ENCODE measurements at regions of chr2 and their contacts with region 1.

Region 1: DNA sequence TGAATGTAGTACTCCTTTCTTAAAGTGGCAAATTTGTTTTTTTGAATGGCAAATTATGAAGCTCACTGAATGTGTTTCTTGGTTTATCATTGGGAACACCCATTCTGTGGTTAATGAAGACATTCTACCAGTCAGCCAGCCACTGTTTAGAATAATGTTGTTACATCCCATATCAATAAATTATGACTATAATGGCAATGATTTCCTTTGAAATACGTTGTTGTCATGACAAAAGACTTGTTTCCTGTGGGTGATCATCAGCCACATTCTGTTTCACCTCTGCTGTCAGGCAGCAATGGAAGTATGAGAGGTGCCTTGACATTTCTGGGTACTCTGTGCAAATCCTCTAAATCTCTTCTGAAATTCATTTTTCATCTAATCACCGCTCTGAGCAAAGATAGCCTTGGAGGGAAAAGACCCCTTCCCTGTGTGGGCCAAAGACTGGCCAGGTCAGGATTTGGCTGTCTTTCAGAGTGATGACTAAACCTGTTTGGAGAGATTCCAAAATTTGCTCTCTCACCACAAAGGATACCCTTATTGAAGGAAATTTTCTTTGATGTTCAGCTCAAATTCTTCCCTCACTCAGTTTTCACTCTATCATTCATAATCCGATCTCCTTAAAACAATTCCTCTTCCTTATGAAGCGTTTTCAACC is 869.2 kb downstream of the BCL11A start:
- DNase-seq: no peak
- ATAC-seq: no peak
- H3K4me3 ChIP-seq: no peak overlapping the region
- H3K4me3 Mint-ChIP-seq: no peak overlapping the region
- H3K27ac ChIP-seq: no peak overlapping the region
- H3K27ac Mint-ChIP-seq: no peak overlapping the region
- H3K4me1 ChIP-seq: no peaks in the 10 kb centered on the region
- H3K4me1 Mint-ChIP-seq: no peaks in the 10 kb centered on the region
- H3K27me3 ChIP-seq: no peaks in the 10 kb centered on the region
- H3K27me3 Mint-ChIP-seq: no peaks in the 10 kb centered on the region
- CTCF ChIP-seq: no peak

Region 2: GRCh38 chr2:59529726-59530125 is 154.5 kb before region 1 on chr2:
- CTCF ChIA-PET with region 1: no interaction called
- POLR2A ChIA-PET with region 1: no interaction called
- intact Hi-C with region 1: no loop called
- DNase-seq: no peak
- ATAC-seq: no peak
- H3K4me3 ChIP-seq: no peak overlapping the region
- H3K4me3 Mint-ChIP-seq: no peak overlapping the region
- H3K27ac ChIP-seq: no peak overlapping the region
- H3K27ac Mint-ChIP-seq: no peak overlapping the region
- H3K4me1 ChIP-seq: no peaks in the 10 kb centered on the region
- H3K4me1 Mint-ChIP-seq: no peaks in the 10 kb centered on the region
- H3K27me3 ChIP-seq: no peaks in the 10 kb centered on the region
- H3K27me3 Mint-ChIP-seq: no peaks in the 10 kb centered on the region
- CTCF ChIP-seq: no peak

Region 3: GRCh38 chr2:59674100-59674499 is 10.1 kb before region 1 on chr2:
- CTCF ChIA-PET with region 1: no interaction called
- POLR2A ChIA-PET with region 1: no interaction called
- intact Hi-C with region 1: loop called in 1 of 2 experiments (anchors 1 kb)
- DNase-seq: no peak
- ATAC-seq: no peak
- H3K4me3 ChIP-seq: no peak overlapping the region
- H3K4me3 Mint-ChIP-seq: no peak overlapping the region
- H3K27ac ChIP-seq: no peak overlapping the region
- H3K27ac Mint-ChIP-seq: no peak overlapping the region
- H3K4me1 ChIP-seq: no peaks in the 10 kb centered on the region
- H3K4me1 Mint-ChIP-seq: no peaks in the 10 kb centered on the region
- H3K27me3 ChIP-seq: no peaks in the 10 kb centered on the region
- H3K27me3 Mint-ChIP-seq: no peaks in the 10 kb centered on the region
- CTCF ChIP-seq: no peak

Region 4: GRCh38 chr2:59706729-59707128 is 22.5 kb after region 1 on chr2:
- CTCF ChIA-PET with region 1: no interaction called
- POLR2A ChIA-PET with region 1: no interaction called
- intact Hi-C with region 1: no loop called
- DNase-seq: no peak
- ATAC-seq: no peak
- H3K4me3 ChIP-seq: no peak overlapping the region
- H3K4me3 Mint-ChIP-seq: no peak overlapping the region
- H3K27ac ChIP-seq: no peak overlapping the region
- H3K27ac Mint-ChIP-seq: no peak overlapping the region
- H3K4me1 ChIP-seq: no peaks in the 10 kb centered on the region
- H3K4me1 Mint-ChIP-seq: no peaks in the 10 kb centered on the region
- H3K27me3 ChIP-seq: no peaks in the 10 kb centered on the region
- H3K27me3 Mint-ChIP-seq: no peaks in the 10 kb centered on the region
- CTCF ChIP-seq: no peak

Region 5: GRCh38 chr2:59816075-59816474 is 131.8 kb after region 1 on chr2:
- CTCF ChIA-PET with region 1: no interaction called
- POLR2A ChIA-PET with region 1: no interaction called
- intact Hi-C with region 1: no loop called
- DNase-seq: no peak
- ATAC-seq: no peak
- H3K4me3 ChIP-seq: no peak overlapping the region
- H3K4me3 Mint-ChIP-seq: no peak overlapping the region
- H3K27ac ChIP-seq: no peak overlapping the region
- H3K27ac Mint-ChIP-seq: no peak overlapping the region
- H3K4me1 ChIP-seq: no peaks in the 10 kb centered on the region
- H3K4me1 Mint-ChIP-seq: no peaks in the 10 kb centered on the region
- H3K27me3 ChIP-seq: no peaks in the 10 kb centered on the region
- H3K27me3 Mint-ChIP-seq: no peaks in the 10 kb centered on the region
- CTCF ChIP-seq: no peak